B cell (primary cell): ENCODE measurements at regions of chr5 and their contacts with region 1.

Region 1: DNA sequence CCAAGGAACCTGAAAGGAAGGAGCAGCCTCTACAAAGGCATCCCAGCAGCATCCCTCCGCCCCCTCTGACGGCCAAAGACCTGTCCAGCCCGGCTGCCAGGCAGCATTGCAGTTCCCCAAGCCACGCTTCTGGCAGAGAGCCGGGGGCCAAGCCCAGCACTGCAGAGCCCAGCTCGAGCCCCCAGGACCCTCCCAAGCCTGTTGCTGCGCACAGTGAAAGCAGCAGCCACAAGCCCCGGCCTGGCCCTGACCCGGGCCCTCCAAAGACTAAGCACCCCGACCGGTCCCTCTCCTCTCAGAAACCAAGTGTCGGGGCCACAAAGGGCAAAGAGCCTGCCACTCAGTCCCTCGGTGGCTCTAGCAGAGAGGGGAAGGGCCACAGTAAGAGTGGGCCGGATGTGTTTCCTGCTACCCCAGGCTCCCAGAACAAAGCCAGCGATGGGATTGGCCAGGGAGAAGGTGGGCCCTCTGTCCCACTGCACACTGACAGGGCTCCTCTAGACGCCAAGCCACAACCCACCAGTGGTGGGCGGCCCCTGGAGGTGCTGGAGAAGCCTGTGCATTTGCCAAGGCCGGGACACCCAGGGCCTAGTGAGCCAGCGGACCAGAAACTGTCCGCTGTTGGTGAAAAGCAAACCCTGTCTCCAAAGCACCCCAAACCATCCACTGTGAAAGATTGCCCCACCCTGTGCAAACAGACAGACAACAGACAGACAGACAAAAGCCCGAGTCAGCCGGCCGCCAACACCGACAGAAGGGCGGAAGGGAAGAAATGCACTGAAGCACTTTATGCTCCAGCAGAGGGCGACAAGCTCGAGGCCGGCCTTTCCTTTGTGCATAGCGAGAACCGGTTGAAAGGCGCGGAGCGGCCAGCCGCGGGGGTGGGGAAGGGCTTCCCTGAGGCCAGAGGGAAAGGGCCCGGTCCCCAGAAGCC is 30.8 kb downstream of the CD180 start:
- DNase-seq: peak; percentile 87
- ATAC-seq: peak; percentile 83
- H3K4me3 ChIP-seq: peak overlapping the region in 4 of 5 experiments; percentile 38 to 63 (median 55)
- H3K4me3 Mint-ChIP-seq: peak overlapping the region; percentile 89
- H3K27ac ChIP-seq: peak overlapping the region; percentile 78 to 83
- H3K27ac Mint-ChIP-seq: peak overlapping the region; percentile 97
- H3K4me1 ChIP-seq: peaks cover 26 to 34% of the 10 kb centered on the region in 2 donors
- H3K4me1 Mint-ChIP-seq: peaks cover 27% of the 10 kb centered on the region
- H3K27me3 ChIP-seq: no peaks in the 10 kb centered on the region
- H3K27me3 Mint-ChIP-seq: no peaks in the 10 kb centered on the region
- CTCF ChIP-seq: peak; percentile 80

Region 2: GRCh38 chr5:67047160-67047559 is 118.6 kb before region 1 on chr5:
- CTCF ChIA-PET with region 1: no interaction called
- POLR2A ChIA-PET with region 1: no interaction called
- intact Hi-C with region 1: no loop called
- DNase-seq: no peak
- ATAC-seq: no peak
- H3K4me3 ChIP-seq: no peak overlapping the region
- H3K4me3 Mint-ChIP-seq: no peak overlapping the region
- H3K27ac ChIP-seq: no peak overlapping the region
- H3K27ac Mint-ChIP-seq: no peak overlapping the region
- H3K4me1 ChIP-seq: no peaks in the 10 kb centered on the region
- H3K4me1 Mint-ChIP-seq: peaks cover 11% of the 10 kb centered on the region
- H3K27me3 ChIP-seq: no peaks in the 10 kb centered on the region
- H3K27me3 Mint-ChIP-seq: peaks cover under 1% of the 10 kb centered on the region
- CTCF ChIP-seq: no peak

Region 3: GRCh38 chr5:67182301-67182790 is 16.6 kb after region 1 on chr5:
- CTCF ChIA-PET with region 1: interaction called, 12 read pairs
- POLR2A ChIA-PET with region 1: interaction called, 4 read pairs
- intact Hi-C with region 1: loop called (anchors 1 kb)
- DNase-seq: no peak
- ATAC-seq: no peak
- H3K4me3 ChIP-seq: no peak overlapping the region
- H3K4me3 Mint-ChIP-seq: no peak overlapping the region
- H3K27ac ChIP-seq: peak overlapping the region in 1 of 2 donors; percentile 54
- H3K27ac Mint-ChIP-seq: peak overlapping the region; percentile 55
- H3K4me1 ChIP-seq: peaks cover 69 to 74% of the 10 kb centered on the region in 2 donors
- H3K4me1 Mint-ChIP-seq: peaks cover 67% of the 10 kb centered on the region
- H3K27me3 ChIP-seq: no peaks in the 10 kb centered on the region
- H3K27me3 Mint-ChIP-seq: no peaks in the 10 kb centered on the region
- CTCF ChIP-seq: no peak

Region 4: DNA sequence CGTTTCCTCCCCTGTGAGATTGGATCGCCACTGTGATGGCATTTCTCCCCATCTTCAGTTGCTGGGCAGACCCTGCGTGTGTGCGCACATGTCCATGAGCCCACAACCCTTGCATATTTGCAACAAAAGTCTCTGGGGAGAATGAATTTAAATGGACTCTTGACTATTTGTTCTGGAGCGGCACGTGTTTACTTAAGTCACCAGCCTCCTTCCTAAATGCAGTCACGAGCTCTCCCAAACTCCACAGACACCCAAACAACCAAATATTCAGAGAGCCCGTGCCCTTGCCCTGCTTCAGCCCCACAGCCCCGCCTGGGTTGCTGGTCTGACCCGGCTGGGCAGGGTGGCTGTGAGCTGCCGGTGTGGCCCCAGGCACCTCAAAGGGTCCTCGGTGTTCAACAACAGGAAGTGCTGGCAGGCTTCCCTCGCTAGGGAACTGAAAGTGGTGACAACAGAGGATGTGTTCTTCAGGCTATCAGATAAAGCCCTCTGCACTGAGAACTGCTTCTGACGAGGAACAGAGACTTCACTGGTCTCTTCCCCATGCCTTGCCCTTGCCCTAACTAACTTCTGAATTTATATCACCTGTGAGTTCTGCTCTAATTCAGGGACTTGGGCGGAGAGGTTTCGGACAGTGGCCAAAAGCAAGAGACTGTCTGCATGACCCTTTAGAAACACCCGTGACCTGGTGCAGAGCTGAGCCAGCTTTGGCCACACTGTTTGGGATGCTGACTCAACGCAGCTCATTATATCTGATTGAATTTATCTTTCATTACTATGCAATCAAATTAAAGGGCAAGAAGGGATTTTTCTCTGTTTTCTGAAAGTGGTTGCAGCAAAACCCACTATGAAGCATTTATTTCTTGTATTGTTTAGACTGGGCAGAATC is 50.0 kb after region 1 on chr5:
- CTCF ChIA-PET with region 1: interaction called, 582 read pairs
- POLR2A ChIA-PET with region 1: interaction called, 14 read pairs
- intact Hi-C with region 1: no loop called
- DNase-seq: peak; percentile 95
- ATAC-seq: peak; percentile 97
- H3K4me3 ChIP-seq: peak overlapping the region in 3 of 5 experiments; percentile 17 to 28 (median 20)
- H3K4me3 Mint-ChIP-seq: peak overlapping the region; percentile 85
- H3K27ac ChIP-seq: peak overlapping the region; percentile 92 to 98
- H3K27ac Mint-ChIP-seq: peak overlapping the region; percentile 100
- H3K4me1 ChIP-seq: peaks cover 34 to 39% of the 10 kb centered on the region in 2 donors
- H3K4me1 Mint-ChIP-seq: peaks cover 56% of the 10 kb centered on the region
- H3K27me3 ChIP-seq: no peaks in the 10 kb centered on the region
- H3K27me3 Mint-ChIP-seq: no peaks in the 10 kb centered on the region
- CTCF ChIP-seq: no peak